Heart left ventricle (tissue), 16 donors: ENCODE measurements at regions of chr10 and their contacts with region 1.

Region 1: DNA sequence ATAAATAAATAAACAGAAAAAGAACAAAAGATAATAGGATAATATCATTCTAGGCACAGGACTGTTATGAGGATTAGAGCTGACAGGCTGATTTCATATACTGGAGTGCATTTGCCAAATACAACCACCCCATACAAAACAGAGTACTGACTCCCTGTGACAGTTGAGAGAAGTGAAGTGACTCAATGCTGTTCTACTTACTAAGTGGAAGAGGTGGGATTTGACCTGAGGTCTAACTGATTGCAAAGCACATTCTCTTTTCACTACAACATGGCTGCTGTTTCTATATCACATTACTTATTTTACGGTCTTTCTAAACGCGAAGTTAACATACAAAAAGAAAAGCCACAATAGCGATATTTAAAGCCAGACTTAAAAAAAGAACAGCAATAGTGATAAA is 51.4 kb downstream of the ITGB1 start:
- DNase-seq: no peak
- ATAC-seq: no peak
- H3K4me3 ChIP-seq: no peak overlapping the region
- H3K27ac ChIP-seq: no peak overlapping the region
- H3K4me1 ChIP-seq: peaks cover 0 to 13% (median 2%) of the 10 kb centered on the region in 12 donors
- H3K27me3 ChIP-seq: no peaks in the 10 kb centered on the region
- CTCF ChIP-seq: no peak
- POLR2A ChIP-seq: no peak

Region 2: GRCh38 chr10:32459051-32459698 is 447.4 kb before region 1 on chr10:
- intact Hi-C with region 1: loop called in 1 of 10 experiments (anchors 5 kb)
- DNase-seq: no peak
- ATAC-seq: peak in 1 of 4 donors; percentile 18
- H3K4me3 ChIP-seq: no peak overlapping the region
- H3K27ac ChIP-seq: no peak overlapping the region
- H3K4me1 ChIP-seq: no peaks in the 10 kb centered on the region
- H3K27me3 ChIP-seq: no peaks in the 10 kb centered on the region
- CTCF ChIP-seq: no peak
- POLR2A ChIP-seq: no peak

Region 3: GRCh38 chr10:32938554-32939061 is 32.0 kb after region 1 on chr10:
- intact Hi-C with region 1: loop called in 1 of 10 experiments (anchors 5 kb)
- DNase-seq: peak in 4 of 5 donors; percentile 34 to 61 (median 42)
- ATAC-seq: peak; percentile 35 to 62 (median 58)
- H3K4me3 ChIP-seq: peak overlapping the region in 10 of 12 donors; percentile 11 to 40 (median 20)
- H3K27ac ChIP-seq: peak overlapping the region; percentile 3 to 87 (median 72)
- H3K4me1 ChIP-seq: peaks cover 7 to 87% (median 69%) of the 10 kb centered on the region in 12 donors
- H3K27me3 ChIP-seq: no peaks in the 10 kb centered on the region
- CTCF ChIP-seq: no peak
- POLR2A ChIP-seq: no peak